Naive thymus-derived CD4-positive, alpha-beta T cell (primary cell): ENCODE measurements at regions of chr20 and their contacts with region 1.

Region 1: DNA sequence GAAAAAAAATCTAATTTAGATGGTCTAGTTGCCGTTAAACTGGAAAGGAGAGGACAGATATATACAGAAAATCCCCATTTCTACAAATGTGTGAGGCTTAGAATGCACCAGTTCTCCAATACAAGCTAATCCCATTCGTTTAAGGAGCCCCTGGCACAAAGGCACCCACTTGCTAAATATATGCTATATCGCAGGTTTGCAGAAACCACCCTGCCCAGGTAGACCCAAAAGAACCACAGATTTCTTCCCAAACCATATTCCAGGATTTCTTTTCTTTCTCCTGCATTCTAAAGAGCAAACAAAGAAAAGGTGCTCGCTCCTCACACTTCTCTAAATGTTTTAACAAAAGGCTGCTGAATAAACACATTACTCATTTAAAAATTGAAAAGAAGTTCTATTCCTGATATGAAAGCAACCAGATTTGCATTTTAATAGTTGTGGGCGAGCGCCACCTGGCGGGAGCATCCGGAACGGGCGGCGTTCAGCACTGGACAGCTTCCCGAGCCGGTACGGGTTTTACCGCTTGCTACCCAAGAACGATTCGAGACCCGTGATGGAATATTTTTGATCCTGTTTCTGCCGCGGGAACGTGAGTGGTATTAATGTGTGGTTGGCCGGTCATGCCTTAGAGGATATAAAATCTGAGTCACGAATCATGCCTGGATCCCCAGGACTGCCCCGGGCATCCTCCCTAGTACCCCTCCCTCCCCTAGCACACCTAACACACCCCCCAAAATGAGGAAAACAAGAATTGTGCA is 2.1 kb downstream of the PTPRT start:
- DNase-seq: peak in 7 of 9 donors; percentile 15 to 72 (median 29)
- ATAC-seq: no peak
- H3K4me3 ChIP-seq: no peak overlapping the region
- H3K4me3 Mint-ChIP-seq: peak overlapping the region in 2 of 10 donors; percentile 20 to 40
- H3K27ac ChIP-seq: no peak overlapping the region
- H3K27ac Mint-ChIP-seq: no peak overlapping the region
- H3K4me1 ChIP-seq: no peaks in the 10 kb centered on the region
- H3K4me1 Mint-ChIP-seq: peaks cover 0 to 11% (median 7%) of the 10 kb centered on the region in 7 donors
- H3K27me3 ChIP-seq: peaks cover 0 to 4% of the 10 kb centered on the region in 2 donors
- H3K27me3 Mint-ChIP-seq: peaks cover 42 to 61% (median 57%) of the 10 kb centered on the region in 5 donors

Region 2: GRCh38 chr20:41738604-41739206 is 1449.0 kb before region 1 on chr20:
- CTCF ChIA-PET with region 1: no interaction called
- POLR2A ChIA-PET with region 1: no interaction called
- intact Hi-C with region 1: loop called in 1 of 2 experiments (anchors 2 kb)
- DNase-seq: peak in 4 of 9 donors; percentile 3 to 25 (median 14)
- ATAC-seq: peak; percentile 61
- H3K4me3 ChIP-seq: no peak overlapping the region
- H3K4me3 Mint-ChIP-seq: no peak overlapping the region
- H3K27ac ChIP-seq: no peak overlapping the region
- H3K27ac Mint-ChIP-seq: no peak overlapping the region
- H3K4me1 ChIP-seq: no peaks in the 10 kb centered on the region
- H3K4me1 Mint-ChIP-seq: no peaks in the 10 kb centered on the region
- H3K27me3 ChIP-seq: no peaks in the 10 kb centered on the region
- H3K27me3 Mint-ChIP-seq: no peaks in the 10 kb centered on the region

Region 3: GRCh38 chr20:41955999-41956705 is 1231.5 kb before region 1 on chr20:
- CTCF ChIA-PET with region 1: no interaction called
- POLR2A ChIA-PET with region 1: no interaction called
- intact Hi-C with region 1: loop called in 1 of 2 experiments (anchors 5 kb)
- DNase-seq: no peak
- ATAC-seq: no peak
- H3K4me3 ChIP-seq: no peak overlapping the region
- H3K4me3 Mint-ChIP-seq: no peak overlapping the region
- H3K27ac ChIP-seq: no peak overlapping the region
- H3K27ac Mint-ChIP-seq: no peak overlapping the region
- H3K4me1 ChIP-seq: no peaks in the 10 kb centered on the region
- H3K4me1 Mint-ChIP-seq: peaks cover 0 to 3% (median 0%) of the 10 kb centered on the region in 7 donors
- H3K27me3 ChIP-seq: no peaks in the 10 kb centered on the region
- H3K27me3 Mint-ChIP-seq: peaks cover 0 to 18% (median 13%) of the 10 kb centered on the region in 5 donors

Region 4: DNA sequence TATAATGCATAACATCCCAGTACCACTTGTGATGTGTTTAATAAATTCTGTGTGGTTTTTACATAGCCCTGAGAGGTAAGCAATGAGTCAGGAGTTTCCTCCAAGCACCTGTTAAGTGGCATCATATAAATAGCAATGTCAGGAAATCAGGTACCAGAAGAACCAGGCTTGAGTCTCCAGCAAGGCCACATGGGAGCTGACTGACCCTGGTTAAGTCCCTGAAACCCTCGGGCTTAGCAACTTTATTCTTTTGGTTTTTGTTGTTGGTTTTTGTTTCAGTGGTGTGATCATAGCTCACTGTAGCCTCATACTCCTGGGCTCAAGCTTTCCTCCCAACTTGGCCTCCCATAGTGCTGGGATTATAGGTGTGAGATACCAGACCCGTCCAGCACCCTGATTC is 67.9 kb before region 1 on chr20:
- CTCF ChIA-PET with region 1: no interaction called
- POLR2A ChIA-PET with region 1: no interaction called
- intact Hi-C with region 1: no loop called
- DNase-seq: no peak
- ATAC-seq: no peak
- H3K4me3 ChIP-seq: no peak overlapping the region
- H3K4me3 Mint-ChIP-seq: no peak overlapping the region
- H3K27ac ChIP-seq: no peak overlapping the region
- H3K27ac Mint-ChIP-seq: no peak overlapping the region
- H3K4me1 ChIP-seq: no peaks in the 10 kb centered on the region
- H3K4me1 Mint-ChIP-seq: no peaks in the 10 kb centered on the region
- H3K27me3 ChIP-seq: no peaks in the 10 kb centered on the region
- H3K27me3 Mint-ChIP-seq: peaks cover 0 to 19% (median 7%) of the 10 kb centered on the region in 5 donors

Region 5: GRCh38 chr20:43210901-43211300 is 23.2 kb after region 1 on chr20:
- CTCF ChIA-PET with region 1: no interaction called
- POLR2A ChIA-PET with region 1: no interaction called
- intact Hi-C with region 1: no loop called
- DNase-seq: no peak
- ATAC-seq: no peak
- H3K4me3 ChIP-seq: no peak overlapping the region
- H3K4me3 Mint-ChIP-seq: no peak overlapping the region
- H3K27ac ChIP-seq: no peak overlapping the region
- H3K27ac Mint-ChIP-seq: no peak overlapping the region
- H3K4me1 ChIP-seq: no peaks in the 10 kb centered on the region
- H3K4me1 Mint-ChIP-seq: no peaks in the 10 kb centered on the region
- H3K27me3 ChIP-seq: no peaks in the 10 kb centered on the region
- H3K27me3 Mint-ChIP-seq: peaks cover 0 to 32% (median 6%) of the 10 kb centered on the region in 5 donors

Region 6: GRCh38 chr20:43229696-43230095 is 42.0 kb after region 1 on chr20:
- CTCF ChIA-PET with region 1: no interaction called
- POLR2A ChIA-PET with region 1: no interaction called
- intact Hi-C with region 1: no loop called
- DNase-seq: no peak
- ATAC-seq: no peak
- H3K4me3 ChIP-seq: no peak overlapping the region
- H3K4me3 Mint-ChIP-seq: no peak overlapping the region
- H3K27ac ChIP-seq: no peak overlapping the region
- H3K27ac Mint-ChIP-seq: no peak overlapping the region
- H3K4me1 ChIP-seq: no peaks in the 10 kb centered on the region
- H3K4me1 Mint-ChIP-seq: no peaks in the 10 kb centered on the region
- H3K27me3 ChIP-seq: no peaks in the 10 kb centered on the region
- H3K27me3 Mint-ChIP-seq: peaks cover 0 to 26% (median 11%) of the 10 kb centered on the region in 5 donors

Region 7: DNA sequence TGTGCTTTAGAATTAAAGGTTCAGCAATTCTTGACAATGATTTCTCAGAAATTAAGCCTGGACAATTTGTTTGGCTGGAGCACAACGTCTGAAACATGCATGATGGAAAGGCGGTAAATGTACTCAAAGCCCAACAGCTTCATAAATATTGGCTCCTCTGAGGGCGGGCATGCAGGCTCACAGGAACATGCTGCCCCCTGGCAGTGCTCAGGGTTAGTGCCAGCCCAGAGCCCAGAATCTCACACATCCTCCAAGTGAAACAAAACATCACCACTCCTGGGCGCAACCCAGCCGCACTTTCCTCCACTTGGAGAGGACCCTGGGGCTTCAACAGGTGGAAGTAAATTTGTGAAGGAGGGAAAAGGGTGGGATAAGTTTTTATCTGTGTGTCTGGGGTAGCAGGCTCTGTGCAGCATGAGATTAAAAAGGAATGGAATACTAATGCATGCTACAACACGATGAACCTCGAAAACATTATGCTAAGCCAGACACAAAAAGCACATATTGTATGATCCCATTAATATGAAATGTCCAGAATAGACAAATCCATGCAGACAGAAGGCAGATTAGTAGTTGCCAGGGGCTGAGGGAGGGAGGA is 56.1 kb after region 1 on chr20:
- CTCF ChIA-PET with region 1: no interaction called
- POLR2A ChIA-PET with region 1: no interaction called
- intact Hi-C with region 1: no loop called
- DNase-seq: no peak
- ATAC-seq: no peak
- H3K4me3 ChIP-seq: no peak overlapping the region
- H3K4me3 Mint-ChIP-seq: no peak overlapping the region
- H3K27ac ChIP-seq: no peak overlapping the region
- H3K27ac Mint-ChIP-seq: no peak overlapping the region
- H3K4me1 ChIP-seq: no peaks in the 10 kb centered on the region
- H3K4me1 Mint-ChIP-seq: no peaks in the 10 kb centered on the region
- H3K27me3 ChIP-seq: no peaks in the 10 kb centered on the region
- H3K27me3 Mint-ChIP-seq: peaks cover 0 to 40% (median 13%) of the 10 kb centered on the region in 5 donors